CD4-positive, alpha-beta T cell (primary cell): ENCODE measurements at regions of chrX and their contacts with region 1.

Region 1: DNA sequence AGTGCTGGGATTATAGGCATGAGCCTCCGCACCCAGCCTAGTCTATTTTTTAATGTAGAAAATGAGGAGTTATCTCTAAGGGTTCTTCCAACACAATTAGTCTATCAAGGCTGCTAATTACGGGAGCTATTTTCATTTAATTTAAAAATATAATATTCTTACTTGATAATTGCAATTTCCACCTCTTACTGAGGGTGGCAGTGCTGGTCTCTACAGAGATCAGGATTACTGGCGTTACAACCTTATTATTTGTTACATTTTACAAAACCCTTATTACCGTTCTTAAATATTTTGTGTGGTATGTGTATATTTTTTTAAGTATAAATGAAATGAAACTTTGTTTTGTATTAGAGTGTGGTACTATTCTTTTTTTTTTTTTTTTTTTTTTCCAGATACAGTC is 17.6 kb upstream of the GK start:
- DNase-seq: peak in 3 of 14 experiments; percentile 15 to 45 (median 39)
- ATAC-seq: no peak
- H3K4me3 ChIP-seq: no peak overlapping the region
- H3K4me3 Mint-ChIP-seq: no peak overlapping the region
- H3K27ac ChIP-seq: no peak overlapping the region
- H3K27ac Mint-ChIP-seq: no peak overlapping the region
- H3K4me1 ChIP-seq: no peaks in the 10 kb centered on the region
- H3K4me1 Mint-ChIP-seq: no peaks in the 10 kb centered on the region
- H3K27me3 ChIP-seq: no peaks in the 10 kb centered on the region
- H3K27me3 Mint-ChIP-seq: no peaks in the 10 kb centered on the region
- CTCF ChIP-seq: peak; percentile 19

Region 2: GRCh38 chrX:30590368-30590767 is 45.3 kb before region 1 on chrX:
- CTCF ChIA-PET with region 1: no interaction called
- POLR2A ChIA-PET with region 1: no interaction called
- intact Hi-C with region 1: loop called in 1 of 2 experiments (anchors 2 kb)
- DNase-seq: no peak
- ATAC-seq: no peak
- H3K4me3 ChIP-seq: no peak overlapping the region
- H3K4me3 Mint-ChIP-seq: no peak overlapping the region
- H3K27ac ChIP-seq: no peak overlapping the region
- H3K27ac Mint-ChIP-seq: no peak overlapping the region
- H3K4me1 ChIP-seq: no peaks in the 10 kb centered on the region
- H3K4me1 Mint-ChIP-seq: peaks cover 12% of the 10 kb centered on the region
- H3K27me3 ChIP-seq: no peaks in the 10 kb centered on the region
- H3K27me3 Mint-ChIP-seq: no peaks in the 10 kb centered on the region
- CTCF ChIP-seq: no peak

Region 3: DNA sequence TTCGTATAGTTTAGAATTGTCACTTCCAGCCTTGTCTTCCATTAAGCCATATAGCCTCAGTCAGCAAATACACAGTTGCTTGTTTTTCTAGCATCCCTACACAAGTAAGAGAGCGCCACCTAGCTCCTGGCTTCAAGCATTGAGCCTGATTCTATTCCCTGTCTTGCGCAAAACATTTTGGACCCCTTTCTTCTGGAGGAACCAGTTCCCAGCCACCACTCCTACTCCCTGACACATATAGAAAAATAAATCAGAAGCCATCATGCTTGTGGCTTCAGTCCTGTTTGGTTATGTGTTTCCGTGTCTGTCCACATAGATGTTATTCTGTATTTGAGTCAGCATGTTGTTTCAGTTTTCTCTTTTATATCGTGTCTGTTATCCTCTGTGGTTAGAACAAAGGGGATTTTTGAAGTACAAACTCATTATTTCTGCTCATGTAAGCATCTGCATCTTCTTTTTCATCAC is 77.5 kb after region 1 on chrX:
- CTCF ChIA-PET with region 1: no interaction called
- POLR2A ChIA-PET with region 1: no interaction called
- intact Hi-C with region 1: loop called in 1 of 2 experiments (anchors 2 kb)
- DNase-seq: peak; percentile 5 to 63 (median 22)
- ATAC-seq: peak; percentile 49
- H3K4me3 ChIP-seq: no peak overlapping the region
- H3K4me3 Mint-ChIP-seq: no peak overlapping the region
- H3K27ac ChIP-seq: no peak overlapping the region
- H3K27ac Mint-ChIP-seq: peak overlapping the region; percentile 28
- H3K4me1 ChIP-seq: no peaks in the 10 kb centered on the region
- H3K4me1 Mint-ChIP-seq: peaks cover 6% of the 10 kb centered on the region
- H3K27me3 ChIP-seq: no peaks in the 10 kb centered on the region
- H3K27me3 Mint-ChIP-seq: no peaks in the 10 kb centered on the region
- CTCF ChIP-seq: peak; percentile 37